HEK293 (cell line): ENCODE measurements at regions of chr5 and their contacts with region 1.

Region 1: DNA sequence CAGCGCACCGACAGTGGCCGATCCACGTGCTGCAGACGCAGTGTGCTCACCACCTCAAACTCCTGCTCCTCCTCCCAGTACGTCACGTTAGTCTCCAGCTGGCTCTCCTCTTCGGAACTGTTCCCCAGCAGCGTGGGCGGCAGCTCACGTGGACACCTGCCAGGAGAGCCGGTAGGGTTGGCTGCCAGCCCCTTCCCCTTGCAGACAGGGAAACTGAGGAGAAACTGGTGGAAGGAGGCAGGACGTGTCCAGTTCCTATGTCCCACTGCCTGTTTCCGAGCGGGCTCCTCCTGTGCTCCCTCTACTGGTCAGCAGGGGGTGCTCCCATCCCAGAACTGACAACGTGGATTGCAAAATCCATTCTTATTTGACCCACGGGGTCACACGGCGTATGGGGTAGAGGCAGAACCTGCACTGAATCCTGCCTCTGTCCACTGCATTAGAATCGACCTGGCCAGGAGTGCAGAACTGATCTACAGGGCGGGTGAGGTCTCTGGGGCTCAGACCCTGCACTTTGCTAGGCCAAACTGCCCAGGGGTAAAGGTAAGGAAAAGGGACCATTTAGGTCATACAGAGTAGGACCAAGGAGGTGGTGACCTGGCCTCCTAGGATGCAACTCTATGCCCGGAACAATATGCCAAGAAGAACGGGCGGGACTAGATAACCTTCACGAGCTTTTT is 25.7 kb downstream of the PDGFRB start:
- H3K4me3 ChIP-seq: no peak overlapping the region
- H3K27ac ChIP-seq: no peak overlapping the region
- H3K4me1 ChIP-seq: no peaks in the 10 kb centered on the region
- CTCF ChIP-seq: peak; percentile 87

Region 2: DNA sequence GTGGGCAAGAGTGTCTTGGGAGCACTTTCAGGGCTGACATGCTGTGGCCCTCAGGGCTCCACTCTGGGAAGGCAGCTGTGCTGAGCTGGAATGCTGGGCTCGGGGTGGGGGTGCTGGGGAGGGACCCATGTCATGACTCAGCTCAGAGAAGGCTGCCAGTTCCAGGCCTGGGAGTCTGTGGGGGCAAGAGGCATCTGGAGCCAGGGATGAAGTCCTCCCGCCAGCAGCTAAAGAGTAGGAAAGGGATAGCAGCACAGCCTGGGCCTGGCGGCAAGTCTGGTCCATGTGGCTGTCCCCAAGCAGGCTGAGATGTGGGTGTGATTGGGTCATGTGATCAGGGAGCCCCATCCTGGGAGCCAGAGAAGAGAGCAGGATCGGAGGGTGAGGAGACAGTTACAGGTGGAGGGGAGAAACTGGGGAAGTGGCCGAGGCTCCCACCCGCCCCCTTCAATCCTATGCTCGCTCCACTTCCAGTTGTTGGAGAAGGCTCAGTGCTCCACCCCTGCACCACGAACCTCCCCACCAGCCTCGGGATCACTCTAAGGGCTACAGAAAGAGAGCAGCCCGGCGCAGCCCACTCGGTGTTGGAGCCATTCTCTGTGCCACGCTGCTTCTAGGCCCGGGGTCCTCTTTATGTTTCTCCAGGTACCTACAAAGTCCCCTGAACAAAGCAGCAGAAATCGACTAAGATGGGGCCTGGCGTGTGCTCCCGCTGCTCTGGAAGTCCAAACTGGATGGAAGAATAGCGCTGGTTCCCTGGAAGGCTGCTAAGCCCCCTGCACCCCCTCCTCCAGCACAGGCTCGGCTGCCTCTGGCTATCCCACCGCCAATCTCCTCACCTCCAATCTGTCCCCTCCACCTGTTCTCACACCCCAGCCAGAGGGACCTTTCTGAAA is 13.6 kb after region 1 on chr5:
- CTCF ChIA-PET with region 1: interaction called, 13 read pairs
- POLR2A ChIA-PET with region 1: no interaction called
- H3K4me3 ChIP-seq: no peak overlapping the region
- H3K27ac ChIP-seq: no peak overlapping the region
- H3K4me1 ChIP-seq: 0 out of 2 replicates have a peak, but pooled peaks cover 3% of the 10 kb centered on the region
- CTCF ChIP-seq: no peak

Region 3: GRCh38 chr5:150245111-150245789 is 115.3 kb after region 1 on chr5:
- CTCF ChIA-PET with region 1: no interaction called
- POLR2A ChIA-PET with region 1: no interaction called
- H3K4me3 ChIP-seq: no peak overlapping the region
- H3K27ac ChIP-seq: no peak overlapping the region
- H3K4me1 ChIP-seq: no peaks in the 10 kb centered on the region
- CTCF ChIP-seq: no peak